Activated CD4-positive, alpha-beta memory T cell treated with anti-CD3 and anti-CD28 coated beads, Interleukin-2, amount 10 ng/mL, durations not matched to agents 7 days and 5 days (primary cell): ENCODE measurements at regions of chr18 and their contacts with region 1.

Region 1: GRCh38 chr18:267688-268552 is at the start of gene THOC1:
- DNase-seq: peak; percentile 94
- H3K4me3 Mint-ChIP-seq: peak within 1 kb of the TSS; percentile 99
- H3K27ac Mint-ChIP-seq: peak within 1 kb of the TSS; percentile 98
- H3K4me1 Mint-ChIP-seq: peaks cover 35% of the 10 kb centered on the region
- H3K27me3 Mint-ChIP-seq: no peaks in the 10 kb centered on the region
- total RNA-seq, gene THOC1: 42.2 to 43.1 TPM

Region 2: GRCh38 chr18:158128-159036 is 109.5 kb before region 1 on chr18 and contains the start of gene USP14:
- CTCF ChIA-PET with region 1: interaction called, 9 read pairs
- POLR2A ChIA-PET with region 1: interaction called, 47 read pairs
- DNase-seq: peak; percentile 98
- H3K4me3 Mint-ChIP-seq: peak within 1 kb of the TSS; percentile 92
- H3K27ac Mint-ChIP-seq: peak within 1 kb of the TSS; percentile 92
- H3K4me1 Mint-ChIP-seq: peaks cover 24% of the 10 kb centered on the region
- H3K27me3 Mint-ChIP-seq: no peaks in the 10 kb centered on the region
- total RNA-seq, gene USP14: 63.4 to 64.4 TPM

Region 3: GRCh38 chr18:251572-251971 is 16.3 kb before region 1 on chr18:
- CTCF ChIA-PET with region 1: interaction called, 3 read pairs
- POLR2A ChIA-PET with region 1: interaction called, 16 read pairs
- DNase-seq: no peak
- H3K4me3 Mint-ChIP-seq: no peak overlapping the region
- H3K27ac Mint-ChIP-seq: no peak overlapping the region
- H3K4me1 Mint-ChIP-seq: no peaks in the 10 kb centered on the region
- H3K27me3 Mint-ChIP-seq: no peaks in the 10 kb centered on the region